Heart right ventricle (tissue), 16 donors: ENCODE measurements at regions of chr6 and their contacts with region 1.

Region 1: DNA sequence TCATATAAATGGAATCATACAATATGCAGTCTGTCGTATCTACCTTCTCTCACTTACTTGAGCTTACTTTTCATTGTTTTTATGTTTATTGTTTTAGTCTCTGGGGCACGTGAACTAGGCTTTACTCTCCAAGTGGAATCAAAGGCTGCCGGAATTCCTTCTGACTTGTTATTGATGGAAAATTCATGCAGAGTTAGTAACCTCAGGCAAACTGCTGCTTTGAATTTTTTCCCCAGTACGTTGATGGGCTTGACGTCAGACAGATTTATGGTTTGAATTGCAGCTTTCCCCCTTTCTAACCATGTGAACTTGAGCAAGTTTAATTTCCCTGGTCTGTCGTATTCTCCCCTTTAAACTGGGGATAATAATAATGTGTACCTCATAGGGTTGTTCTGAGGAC is 68.6 kb downstream of the ZDHHC14 start:
- DNase-seq: no peak
- ATAC-seq: no peak
- H3K4me3 ChIP-seq: no peak overlapping the region
- H3K27ac ChIP-seq: no peak overlapping the region
- H3K4me1 ChIP-seq: peaks cover 0 to 10% (median 1%) of the 10 kb centered on the region in 9 donors
- H3K27me3 ChIP-seq: no peaks in the 10 kb centered on the region
- CTCF ChIP-seq: no peak

Region 2: GRCh38 chr6:157461000-157461915 is 11.6 kb after region 1 on chr6:
- intact Hi-C with region 1: loop called in 1 of 10 experiments (anchors 1 kb)
- DNase-seq: no peak
- ATAC-seq: peak in 7 of 8 donors; percentile 39 to 82 (median 66)
- H3K4me3 ChIP-seq: no peak overlapping the region
- H3K27ac ChIP-seq: peak overlapping the region in 6 of 10 donors; percentile 33 to 61 (median 46)
- H3K4me1 ChIP-seq: peaks cover 3 to 49% (median 22%) of the 10 kb centered on the region in 9 donors
- H3K27me3 ChIP-seq: no peaks in the 10 kb centered on the region
- CTCF ChIP-seq: peak in 2 of 9 donors; percentile 18 to 19